ENCODE measurements at regions of chr1 and their contacts with region 1.

Region 1: DNA sequence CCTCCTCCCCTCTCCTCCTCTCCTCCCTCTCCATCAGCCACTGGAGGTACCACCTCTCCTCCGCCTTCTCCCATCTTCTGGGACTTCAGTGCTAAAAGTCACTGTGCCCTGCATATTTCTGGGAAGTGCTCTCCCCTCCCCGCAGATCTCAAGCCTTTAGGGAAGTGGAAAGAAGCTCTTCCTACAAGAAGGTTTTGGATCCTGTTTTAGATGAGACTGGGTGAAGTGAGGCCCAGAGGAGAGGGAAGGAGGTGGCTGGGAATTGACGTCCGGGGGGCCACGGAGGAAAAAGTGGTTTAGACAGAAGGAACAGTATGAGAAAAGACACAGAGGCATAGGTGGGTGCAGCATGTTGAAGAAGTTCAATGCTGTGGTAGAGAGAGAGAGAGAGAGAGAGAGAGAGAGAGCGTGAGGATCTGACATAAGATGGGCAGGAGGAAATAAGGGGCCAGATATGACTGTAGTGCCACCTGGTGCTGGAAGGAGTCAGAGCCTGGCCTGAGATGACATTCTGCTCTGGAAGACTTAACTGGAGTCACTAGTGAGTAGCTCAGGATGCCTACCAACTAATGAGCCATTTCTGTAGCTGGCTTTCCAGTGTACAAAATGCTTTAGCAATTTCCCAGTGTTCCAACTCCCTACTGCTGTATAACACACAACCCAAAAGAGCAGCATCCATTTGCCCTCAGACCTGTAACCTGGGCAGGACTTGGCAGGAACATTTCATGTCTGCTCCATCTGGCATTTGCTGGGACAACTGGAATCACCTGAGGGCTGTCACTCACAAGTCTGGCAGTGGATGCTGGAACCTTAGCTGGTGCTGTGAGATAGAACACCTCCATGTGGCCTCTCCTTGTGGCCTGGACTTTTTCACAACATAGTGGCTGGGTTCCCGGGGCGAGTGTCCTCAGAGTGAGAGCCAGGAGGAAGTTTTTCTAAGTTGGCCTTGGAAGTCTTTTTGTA is 16.6 kb upstream of the ZSCAN20 start:
- DNase-seq: peak; percentile 50 to 51
- H3K4me3 ChIP-seq: no peak overlapping the region
- H3K27ac ChIP-seq: no peak overlapping the region
- H3K4me1 ChIP-seq: peaks cover 32% of the 10 kb centered on the region
- H3K27me3 ChIP-seq: no peaks in the 10 kb centered on the region
- CTCF ChIP-seq: peak; percentile 76

Region 2: DNA sequence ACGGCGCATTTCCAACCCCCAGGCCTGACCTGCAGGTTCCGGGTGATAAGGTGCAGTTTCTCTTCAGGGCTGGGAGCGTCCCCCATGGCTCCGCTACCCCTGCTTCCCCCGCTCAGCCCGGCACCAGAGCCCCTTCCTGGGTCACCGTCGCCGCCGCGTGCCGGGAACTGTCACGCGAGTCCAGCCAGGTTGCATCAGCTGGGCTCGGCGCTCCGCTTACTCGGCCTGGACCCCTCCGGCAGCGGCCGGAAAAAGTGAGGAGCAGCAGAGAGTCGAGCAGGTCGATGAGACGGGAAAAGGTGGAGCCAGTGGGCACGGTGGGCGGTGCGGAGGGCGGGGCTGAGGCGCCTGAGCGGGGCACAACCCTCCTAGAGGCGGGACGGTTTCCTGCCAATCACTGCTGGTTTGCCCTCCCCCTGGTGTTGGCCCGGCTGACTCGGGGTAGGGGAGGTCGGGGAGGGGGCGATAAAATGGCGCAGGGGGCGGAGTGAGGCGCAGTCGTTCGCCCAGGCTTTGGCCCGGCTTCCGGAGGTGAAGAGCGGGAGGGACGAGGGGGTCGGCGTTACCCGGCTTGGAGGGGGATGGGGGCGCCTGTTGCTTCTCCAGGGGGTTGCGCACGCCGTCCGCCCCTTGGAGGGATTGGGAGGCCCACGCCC is 638.5 kb before region 1 on chr1 and contains the starts of genes S100PBP and YARS1:
- CTCF ChIA-PET with region 1: no interaction called
- POLR2A ChIA-PET with region 1: no interaction called
- intact Hi-C with region 1: no loop called
- DNase-seq: peak; percentile 90 to 99
- H3K4me3 ChIP-seq: peak within 1 kb of the TSS; percentile 99
- H3K27ac ChIP-seq: peak within 1 kb of the TSS; percentile 89
- H3K4me1 ChIP-seq: peaks cover 38% of the 10 kb centered on the region
- H3K27me3 ChIP-seq: no peaks in the 10 kb centered on the region
- CTCF ChIP-seq: no peak
- total RNA-seq, gene S100PBP: 42.4 and 47.0 TPM in 2 replicates
- total RNA-seq, gene YARS1: 180 and 187 TPM in 2 replicates

Region 3: DNA sequence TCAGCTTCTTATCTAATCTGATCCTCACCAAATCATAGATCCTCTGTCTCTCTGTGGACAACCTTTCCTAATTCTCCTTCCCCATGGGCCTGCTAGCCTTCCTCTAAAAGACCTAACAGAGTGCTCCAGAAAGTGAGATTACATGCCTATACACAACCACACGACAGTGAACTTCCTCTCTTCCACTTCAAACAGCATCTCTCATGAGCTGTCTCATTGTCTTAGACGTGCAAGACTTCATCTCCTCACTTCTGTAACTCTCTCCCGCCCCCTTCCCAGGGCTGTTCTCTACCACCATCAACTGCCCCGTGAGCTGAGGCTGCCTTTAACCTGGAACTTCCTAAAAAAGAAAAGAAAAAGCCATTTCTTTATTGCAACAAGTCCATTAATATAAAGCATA is 120.8 kb before region 1 on chr1:
- CTCF ChIA-PET with region 1: interaction called, 10 read pairs
- POLR2A ChIA-PET with region 1: no interaction called
- intact Hi-C with region 1: no loop called
- DNase-seq: no peak
- H3K4me3 ChIP-seq: no peak overlapping the region
- H3K27ac ChIP-seq: peak overlapping the region; percentile 3; the same call in 1 of the 2 replicates
- H3K4me1 ChIP-seq: 0 out of 2 replicates have a peak, but pooled peaks cover 6% of the 10 kb centered on the region
- H3K27me3 ChIP-seq: no peaks in the 10 kb centered on the region
- CTCF ChIP-seq: no peak

Region 4: GRCh38 chr1:33367485-33368405 is 88.1 kb before region 1 on chr1:
- CTCF ChIA-PET with region 1: no interaction called
- POLR2A ChIA-PET with region 1: no interaction called
- intact Hi-C with region 1: loop called (anchors 5 kb)
- DNase-seq: peak; percentile 48 to 80
- H3K4me3 ChIP-seq: no peak overlapping the region
- H3K27ac ChIP-seq: no peak overlapping the region
- H3K4me1 ChIP-seq: no peaks in the 10 kb centered on the region; the same call in 1 of the 2 replicates
- H3K27me3 ChIP-seq: no peaks in the 10 kb centered on the region
- CTCF ChIP-seq: peak; percentile 94

Region 5: GRCh38 chr1:33482412-33482811 is 26.6 kb after region 1 on chr1:
- CTCF ChIA-PET with region 1: no interaction called
- POLR2A ChIA-PET with region 1: no interaction called
- intact Hi-C with region 1: no loop called
- DNase-seq: no peak
- H3K4me3 ChIP-seq: no peak overlapping the region
- H3K27ac ChIP-seq: no peak overlapping the region
- H3K4me1 ChIP-seq: no peaks in the 10 kb centered on the region
- H3K27me3 ChIP-seq: no peaks in the 10 kb centered on the region
- CTCF ChIP-seq: no peak

Region 6: GRCh38 chr1:35350872-35351271 is 1895.1 kb after region 1 on chr1:
- CTCF ChIA-PET with region 1: interaction called, 11 read pairs
- POLR2A ChIA-PET with region 1: no interaction called
- intact Hi-C with region 1: no loop called
- DNase-seq: no peak
- H3K4me3 ChIP-seq: no peak overlapping the region
- H3K27ac ChIP-seq: no peak overlapping the region
- H3K4me1 ChIP-seq: no peaks in the 10 kb centered on the region
- H3K27me3 ChIP-seq: no peaks in the 10 kb centered on the region
- CTCF ChIP-seq: no peak

Measured in PC-9 (cell line).